ENCODE measurements at regions of chrX and their contacts with region 1.

Region 1: GRCh38 chrX:11100281-11101035 is 10.7 kb upstream of the HCCS start:
- DNase-seq: peak; percentile 52
- H3K4me3 ChIP-seq: no peak overlapping the region
- H3K27ac ChIP-seq: no peak overlapping the region
- H3K27me3 ChIP-seq: no peaks in the 10 kb centered on the region
- CTCF ChIP-seq: peak; percentile 50

Region 2: GRCh38 chrX:10722851-10723250 is 377.6 kb before region 1 on chrX:
- CTCF ChIA-PET with region 1: interaction called, 36 read pairs
- POLR2A ChIA-PET with region 1: no interaction called
- DNase-seq: peak; percentile 24
- H3K4me3 ChIP-seq: no peak overlapping the region
- H3K27ac ChIP-seq: no peak overlapping the region
- H3K27me3 ChIP-seq: no peaks in the 10 kb centered on the region
- CTCF ChIP-seq: peak; percentile 75

Region 3: GRCh38 chrX:10769195-10769594 is 331.3 kb before region 1 on chrX:
- CTCF ChIA-PET with region 1: interaction called, 11 read pairs
- POLR2A ChIA-PET with region 1: no interaction called
- DNase-seq: no peak
- H3K4me3 ChIP-seq: peak overlapping the region; percentile 41; the same call in 1 of the 2 replicates
- H3K27ac ChIP-seq: peak overlapping the region; percentile 52
- H3K27me3 ChIP-seq: no peaks in the 10 kb centered on the region
- CTCF ChIP-seq: peak; percentile 54

Region 4: GRCh38 chrX:11111038-11111851 is 10.8 kb after region 1 on chrX and contains the start of gene HCCS:
- CTCF ChIA-PET with region 1: no interaction called
- POLR2A ChIA-PET with region 1: no interaction called
- DNase-seq: peak; percentile 41
- H3K4me3 ChIP-seq: peak within 1 kb of the TSS; percentile 79
- H3K27ac ChIP-seq: peak within 1 kb of the TSS; percentile 47
- H3K27me3 ChIP-seq: no peaks in the 10 kb centered on the region
- CTCF ChIP-seq: 0 out of 2 replicates have a peak, but pooled peaks have one; percentile 13
- polyA plus RNA-seq, gene HCCS: 26.7 and 32.3 TPM in 2 replicates